ENCODE measurements at regions of chr15 and their contacts with region 1.

Region 1: DNA sequence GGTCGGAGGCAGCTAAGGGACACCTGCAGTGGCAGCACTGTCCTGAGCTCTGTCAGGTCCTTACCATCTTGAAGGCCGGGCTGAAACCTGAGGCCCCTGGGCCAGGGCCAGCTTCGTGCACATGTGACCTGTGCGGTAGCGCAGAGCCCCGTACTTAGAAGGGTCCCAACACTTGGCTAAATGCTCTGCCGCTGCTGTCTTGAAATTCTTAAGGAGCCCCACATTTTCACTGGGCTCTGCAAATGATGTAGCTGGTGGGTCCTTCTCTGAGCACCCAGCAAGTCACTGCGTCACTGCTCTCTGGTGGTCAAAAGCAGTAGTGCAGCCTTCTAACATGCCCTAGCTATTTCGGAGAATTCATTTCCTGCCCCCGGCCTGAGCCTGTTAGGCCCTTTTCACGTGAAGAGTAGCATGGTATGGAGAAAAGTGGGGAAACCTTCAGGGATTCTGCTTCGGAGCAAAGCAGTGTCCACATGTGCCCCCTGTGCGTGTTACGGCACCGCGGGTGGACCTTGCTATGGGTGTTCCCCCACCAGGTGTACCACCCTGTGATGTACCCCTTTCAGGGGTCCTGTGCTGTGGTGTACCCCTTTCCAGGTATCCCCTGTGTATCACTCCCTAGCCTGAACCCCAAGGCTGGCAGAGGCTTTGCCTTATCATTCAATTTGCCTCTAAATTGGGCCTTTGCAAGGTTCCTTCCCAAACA is 79.7 kb downstream of the TMEM266 start:
- DNase-seq: peak; percentile 83 to 92
- H3K4me3 ChIP-seq: peak overlapping the region in 1 of 4 donors; percentile 8
- H3K27ac ChIP-seq: no peak overlapping the region
- H3K4me1 ChIP-seq: peaks cover 9 to 15% (median 13%) of the 10 kb centered on the region in 4 donors
- H3K27me3 ChIP-seq: peaks cover 0 to 14% (median 0%) of the 10 kb centered on the region in 3 donors
- CTCF ChIP-seq: peak in 5 of 7 experiments; percentile 87 to 93 (median 90)
- EP300 ChIP-seq: no peak
- POLR2A ChIP-seq: no peak

Region 2: GRCh38 chr15:76059320-76060117 is 80.0 kb before region 1 on chr15 and contains the start of gene TMEM266:
- intact Hi-C with region 1: loop called (anchors 5 kb)
- DNase-seq: peak; percentile 43 to 86
- H3K4me3 ChIP-seq: peak within 1 kb of the TSS; percentile 63 to 85 (median 68)
- H3K27ac ChIP-seq: peak within 1 kb of the TSS in 1 of 5 donors; percentile 50
- H3K4me1 ChIP-seq: peaks cover 21 to 31% (median 26%) of the 10 kb centered on the region in 4 donors
- H3K27me3 ChIP-seq: peaks cover 0 to 55% (median 4%) of the 10 kb centered on the region in 3 donors
- CTCF ChIP-seq: no peak
- EP300 ChIP-seq: no peak
- POLR2A ChIP-seq: no peak
- total RNA-seq, gene TMEM266: 2.8 TPM in 1 of 5 donors, not detected in the others

Region 3: DNA sequence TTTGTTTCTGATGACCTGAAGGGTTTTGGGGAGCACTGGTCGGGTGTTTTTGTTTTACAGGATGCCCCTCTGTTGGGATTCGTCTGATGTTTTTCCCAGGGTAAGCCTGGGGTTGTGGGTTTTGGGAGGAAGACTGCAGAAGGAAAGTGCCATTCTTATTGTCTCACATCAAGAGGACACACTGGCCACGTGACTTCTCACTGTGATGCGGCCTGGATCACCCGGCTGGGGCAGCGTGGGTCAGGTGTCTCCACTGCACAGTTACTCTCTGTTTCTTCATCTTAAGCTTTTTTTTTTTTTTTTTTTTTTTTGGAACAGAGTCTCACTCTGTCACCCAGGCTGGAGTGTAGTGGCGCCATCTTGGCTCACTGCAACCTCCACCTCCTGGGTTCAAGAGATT is 40.8 kb after region 1 on chr15:
- intact Hi-C with region 1: no loop called
- DNase-seq: no peak
- H3K4me3 ChIP-seq: no peak overlapping the region
- H3K27ac ChIP-seq: no peak overlapping the region
- H3K4me1 ChIP-seq: peaks cover 0 to 3% (median 0%) of the 10 kb centered on the region in 4 donors
- H3K27me3 ChIP-seq: peaks cover 0 to 61% (median 18%) of the 10 kb centered on the region in 3 donors
- CTCF ChIP-seq: no peak
- EP300 ChIP-seq: no peak
- POLR2A ChIP-seq: no peak

Region 4: DNA sequence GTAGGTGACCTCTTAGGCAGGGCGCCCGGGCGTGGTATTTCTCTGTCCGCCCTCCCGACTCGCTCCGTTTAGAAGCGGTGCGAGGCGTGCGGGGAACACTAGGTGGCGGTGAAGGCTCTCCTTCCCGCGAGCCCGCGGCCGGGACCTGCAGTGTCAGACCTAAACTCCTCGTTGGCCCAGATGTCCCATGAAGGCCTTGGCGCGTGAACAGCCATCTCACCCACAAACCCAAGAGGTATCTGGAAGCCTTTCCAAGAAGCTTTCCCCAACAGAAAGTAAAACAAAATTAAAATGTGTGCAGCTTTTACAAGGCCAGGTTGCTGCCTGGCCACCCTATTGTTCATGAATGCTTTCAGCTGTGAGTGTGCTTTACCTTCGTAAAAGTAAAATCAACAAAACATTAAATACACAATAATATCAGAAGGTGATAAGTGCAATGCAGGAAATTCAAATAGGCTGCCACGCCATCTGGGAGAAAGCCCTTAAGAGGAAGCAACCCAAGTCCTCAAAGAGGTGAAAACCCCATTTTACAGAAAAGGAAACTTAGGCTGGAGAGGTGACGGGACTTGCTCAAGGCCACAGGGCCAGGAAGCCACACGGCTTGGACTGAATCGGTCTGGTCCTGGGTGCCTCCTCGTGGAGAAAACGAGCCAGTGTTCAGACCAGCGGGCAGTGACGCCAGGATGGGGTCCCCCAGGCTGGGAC is 51.5 kb after region 1 on chr15:
- intact Hi-C with region 1: no loop called
- DNase-seq: peak; percentile 91 to 93
- H3K4me3 ChIP-seq: peak overlapping the region; percentile 8 to 18 (median 14)
- H3K27ac ChIP-seq: peak overlapping the region; percentile 30 to 83 (median 63)
- H3K4me1 ChIP-seq: peaks cover 12 to 47% (median 33%) of the 10 kb centered on the region in 4 donors
- H3K27me3 ChIP-seq: peaks cover 0 to 65% (median 0%) of the 10 kb centered on the region in 3 donors
- CTCF ChIP-seq: peak in 5 of 7 experiments; percentile 75 to 92 (median 87)
- EP300 ChIP-seq: no peak
- POLR2A ChIP-seq: no peak